Activated naive CD4-positive, alpha-beta T cell treated with anti-CD3 and anti-CD28 coated beads for 36 hours (primary cell): ENCODE measurements at regions of chr9 and their contacts with region 1.

Region 1: DNA sequence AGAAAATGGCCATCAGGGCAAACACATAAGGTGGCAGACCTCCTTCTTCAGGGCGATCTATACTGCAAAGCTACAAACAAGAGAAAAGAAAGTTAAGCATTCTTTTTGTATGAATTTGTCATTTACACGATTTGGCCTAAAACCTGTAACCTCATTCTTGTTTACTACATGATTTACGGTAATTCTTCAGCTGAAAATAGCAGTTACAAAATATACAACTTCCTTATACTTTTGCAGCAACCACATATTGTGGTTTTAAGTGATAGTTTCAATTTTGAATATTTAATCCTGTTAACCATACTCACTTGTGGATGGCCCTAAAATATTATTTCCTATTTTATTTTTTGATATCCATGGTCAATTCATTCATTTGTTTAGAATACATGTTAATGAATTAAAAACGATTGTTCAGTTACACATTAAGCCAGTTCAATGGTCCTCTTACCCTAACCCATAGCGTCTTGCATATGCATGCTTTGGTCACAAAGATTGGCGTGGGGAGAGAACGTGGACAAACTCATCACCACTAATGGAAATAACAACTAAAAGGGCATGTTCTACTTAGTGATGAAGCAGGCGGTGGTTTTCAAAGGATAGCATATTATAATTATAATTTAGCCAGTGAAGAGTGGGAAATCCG is 16.6 kb downstream of the TUT7 start:
- DNase-seq: no peak
- H3K4me3 Mint-ChIP-seq: no peak overlapping the region
- H3K27ac Mint-ChIP-seq: no peak overlapping the region
- H3K4me1 Mint-ChIP-seq: peaks cover 39% of the 10 kb centered on the region
- H3K27me3 Mint-ChIP-seq: no peaks in the 10 kb centered on the region

Region 2: GRCh38 chr9:86303316-86303975 is 34.1 kb before region 1 on chr9:
- CTCF ChIA-PET with region 1: no interaction called
- intact Hi-C with region 1: loop called (anchors 5 kb)
- DNase-seq: peak; percentile 61
- H3K4me3 Mint-ChIP-seq: no peak overlapping the region
- H3K27ac Mint-ChIP-seq: peak overlapping the region; percentile 81
- H3K4me1 Mint-ChIP-seq: peaks cover 16% of the 10 kb centered on the region
- H3K27me3 Mint-ChIP-seq: no peaks in the 10 kb centered on the region

Region 3: GRCh38 chr9:86347991-86348390 is 10.4 kb after region 1 on chr9:
- CTCF ChIA-PET with region 1: no interaction called
- intact Hi-C with region 1: loop called (anchors 1 kb)
- DNase-seq: no peak
- H3K4me3 Mint-ChIP-seq: no peak overlapping the region
- H3K27ac Mint-ChIP-seq: no peak overlapping the region
- H3K4me1 Mint-ChIP-seq: peaks cover 48% of the 10 kb centered on the region
- H3K27me3 Mint-ChIP-seq: no peaks in the 10 kb centered on the region